AG04449 (cell line): ENCODE measurements at regions of chr5 and their contacts with region 1.

Region 1: GRCh38 chr5:78627175-78627574 is 21.4 kb downstream of the LHFPL2 start:
- DNase-seq: no peak
- H3K4me3 ChIP-seq: no peak overlapping the region
- CTCF ChIP-seq: peak; percentile 42

Region 2: GRCh38 chr5:78638423-78638822 is 11.2 kb after region 1 on chr5:
- CTCF ChIA-PET with region 1: interaction called, 15 read pairs
- POLR2A ChIA-PET with region 1: no interaction called
- DNase-seq: peak; percentile 59
- H3K4me3 ChIP-seq: no peak overlapping the region
- CTCF ChIP-seq: no peak